ENCODE measurements at regions of chr15 and their contacts with region 1.

Region 1: DNA sequence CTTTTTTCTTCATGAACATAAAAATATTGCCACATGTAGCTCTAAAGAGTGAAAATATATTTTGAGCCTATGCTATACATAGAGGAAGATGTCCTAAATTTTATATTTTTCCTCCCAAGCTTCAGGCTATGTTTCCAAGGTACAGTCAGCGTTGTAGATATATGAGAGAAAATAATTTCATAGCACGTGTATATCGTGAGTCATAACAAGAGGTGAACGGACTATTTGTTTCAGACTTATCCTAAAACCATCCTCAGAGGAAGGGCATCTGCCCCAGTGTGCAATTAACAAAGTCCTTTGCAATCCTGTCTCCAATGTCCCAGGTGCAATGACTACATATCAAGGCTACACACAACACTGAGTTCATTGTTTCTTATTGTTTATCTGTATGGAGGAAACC is 177.3 kb upstream of the ARRDC4 start:
- DNase-seq: no peak
- ATAC-seq: no peak
- H3K4me3 ChIP-seq: no peak overlapping the region
- H3K27ac ChIP-seq: no peak overlapping the region
- H3K4me1 ChIP-seq: no peaks in the 10 kb centered on the region
- H3K27me3 ChIP-seq: no peaks in the 10 kb centered on the region
- CTCF ChIP-seq: no peak
- POLR2A ChIP-seq: no peak

Region 2: GRCh38 chr15:97836003-97836402 is 52.8 kb after region 1 on chr15:
- intact Hi-C with region 1: loop called in 1 of 10 experiments (anchors 1 kb)
- DNase-seq: no peak
- ATAC-seq: no peak
- H3K4me3 ChIP-seq: no peak overlapping the region
- H3K27ac ChIP-seq: no peak overlapping the region
- H3K4me1 ChIP-seq: no peaks in the 10 kb centered on the region
- H3K27me3 ChIP-seq: no peaks in the 10 kb centered on the region
- CTCF ChIP-seq: no peak
- POLR2A ChIP-seq: no peak

Region 3: DNA sequence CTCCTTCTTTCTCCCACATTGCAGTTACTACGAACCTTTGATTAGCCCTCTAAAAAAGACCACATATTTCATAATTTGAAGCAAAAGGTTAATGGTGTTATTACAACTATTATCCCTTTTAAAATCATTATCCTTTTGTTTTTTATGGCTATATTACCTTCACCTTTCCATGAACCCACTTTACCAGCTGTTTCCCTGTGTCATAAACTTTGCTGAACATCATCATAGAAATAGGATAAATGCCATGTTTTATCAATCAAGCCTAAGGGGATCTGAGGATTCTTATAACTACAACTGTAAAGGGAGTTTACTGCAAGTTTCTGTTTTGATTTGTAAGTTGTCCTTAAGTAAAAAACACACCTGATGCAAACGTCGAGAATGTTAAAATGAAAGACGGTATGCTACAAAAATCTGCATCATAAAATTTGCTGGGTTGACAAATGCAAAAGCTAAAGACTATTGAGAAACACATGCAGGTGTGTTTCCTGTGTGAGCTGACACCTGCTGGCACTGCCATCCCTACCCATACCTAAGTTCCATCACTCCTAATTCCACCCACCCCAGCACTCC is 138.1 kb after region 1 on chr15:
- intact Hi-C with region 1: no loop called
- DNase-seq: no peak
- ATAC-seq: no peak
- H3K4me3 ChIP-seq: no peak overlapping the region
- H3K27ac ChIP-seq: no peak overlapping the region
- H3K4me1 ChIP-seq: no peaks in the 10 kb centered on the region
- H3K27me3 ChIP-seq: peaks cover 0 to 7% (median 0%) of the 10 kb centered on the region in 9 donors
- CTCF ChIP-seq: no peak
- POLR2A ChIP-seq: no peak

Measured in heart left ventricle (tissue), 16 donors.